Naive thymus-derived CD4-positive, alpha-beta T cell (primary cell): ENCODE measurements at regions of chr10 and their contacts with region 1.

Region 1: DNA sequence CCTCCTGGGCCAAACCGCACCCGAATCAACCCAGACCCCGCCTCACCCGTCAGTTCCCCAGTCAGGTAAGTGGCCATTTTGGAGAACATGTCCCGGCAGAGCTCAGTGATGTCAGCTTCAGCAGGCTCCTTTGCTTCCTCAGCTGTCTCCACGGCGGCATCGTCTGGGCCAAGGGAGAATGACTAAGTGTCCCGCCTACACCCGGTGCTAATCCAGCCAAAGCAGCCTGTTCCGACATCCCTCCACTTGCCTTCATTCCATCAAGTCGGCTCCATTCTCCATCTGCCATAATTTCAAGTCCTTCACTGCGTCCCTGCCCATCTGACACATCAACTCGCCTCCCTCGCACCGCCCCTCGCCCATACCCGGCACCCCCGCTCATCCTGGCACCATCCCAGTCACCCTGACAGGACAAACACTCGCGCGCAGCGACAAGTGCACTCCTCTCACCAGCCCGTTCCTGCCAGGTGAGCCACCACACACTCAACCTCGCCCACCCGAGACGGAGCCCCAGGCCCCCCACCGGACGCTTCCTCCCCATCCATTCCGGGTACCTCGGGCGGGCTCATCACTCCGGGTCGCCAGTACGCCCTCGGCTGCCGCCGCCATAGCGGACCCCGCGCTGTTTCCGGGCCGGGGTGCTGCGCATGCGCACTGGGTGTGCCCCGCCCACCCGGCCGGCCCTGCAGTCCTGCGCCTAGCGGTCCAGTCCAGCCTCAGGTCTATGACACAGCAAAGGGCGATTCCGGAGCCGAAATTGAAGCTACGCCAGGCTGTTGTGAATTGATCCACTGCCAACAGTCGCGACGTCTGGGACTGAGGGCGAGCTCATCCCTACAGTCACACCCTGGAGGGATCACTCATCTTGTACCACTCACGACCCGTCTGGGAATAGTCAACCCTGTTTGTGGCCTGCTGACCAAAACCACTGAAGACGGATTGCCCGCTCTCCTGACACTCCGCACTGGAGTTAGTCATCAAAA is at the start of gene BLOC1S2:
- DNase-seq: peak; percentile 71 to 97 (median 86)
- ATAC-seq: peak; percentile 92
- H3K4me3 ChIP-seq: peak within 1 kb of the TSS; percentile 99
- H3K4me3 Mint-ChIP-seq: peak within 1 kb of the TSS; percentile 95 to 100 (median 100)
- H3K27ac ChIP-seq: peak within 1 kb of the TSS; percentile 86
- H3K27ac Mint-ChIP-seq: peak within 1 kb of the TSS; percentile 94 to 100 (median 99)
- H3K4me1 ChIP-seq: peaks cover 10 to 17% of the 10 kb centered on the region in 2 donors
- H3K4me1 Mint-ChIP-seq: peaks cover 14 to 32% (median 26%) of the 10 kb centered on the region in 7 donors
- H3K27me3 ChIP-seq: no peaks in the 10 kb centered on the region
- H3K27me3 Mint-ChIP-seq: no peaks in the 10 kb centered on the region
- total RNA-seq, gene BLOC1S2: 31.5 to 51.3 (median 39.9) TPM

Region 2: DNA sequence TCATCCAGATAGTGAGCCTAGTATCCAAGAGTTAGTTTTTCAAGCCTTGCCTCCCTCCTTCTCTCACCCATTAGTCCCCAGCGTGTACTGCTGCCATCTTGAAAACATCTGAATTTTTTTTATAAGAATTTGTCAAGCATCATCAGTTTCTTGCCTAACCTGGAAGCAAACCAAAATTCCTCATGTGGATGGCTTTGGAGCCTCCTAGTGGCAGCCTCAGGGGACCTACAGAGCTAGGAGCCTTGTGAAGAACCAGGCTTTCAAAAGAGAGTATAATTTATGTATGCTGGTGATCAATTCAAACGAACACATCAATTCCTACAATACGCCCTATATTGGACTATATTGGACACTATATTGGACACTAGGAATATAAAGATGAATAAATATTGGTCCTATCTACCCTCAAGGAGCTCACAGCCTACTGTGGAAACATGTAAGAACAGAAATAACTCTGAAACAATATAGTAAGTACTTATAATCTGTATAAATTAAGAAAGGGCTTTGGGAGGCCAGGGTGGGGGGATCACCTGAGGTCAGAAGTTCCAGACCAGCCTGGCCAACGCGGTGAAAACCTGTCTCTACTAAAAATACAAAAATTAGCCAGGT is 1114.1 kb before region 1 on chr10:
- CTCF ChIA-PET with region 1: no interaction called
- POLR2A ChIA-PET with region 1: no interaction called
- intact Hi-C with region 1: no loop called
- DNase-seq: no peak
- ATAC-seq: no peak
- H3K4me3 ChIP-seq: no peak overlapping the region
- H3K4me3 Mint-ChIP-seq: no peak overlapping the region
- H3K27ac ChIP-seq: no peak overlapping the region
- H3K27ac Mint-ChIP-seq: no peak overlapping the region
- H3K4me1 ChIP-seq: no peaks in the 10 kb centered on the region
- H3K4me1 Mint-ChIP-seq: no peaks in the 10 kb centered on the region
- H3K27me3 ChIP-seq: no peaks in the 10 kb centered on the region
- H3K27me3 Mint-ChIP-seq: peaks cover 2 to 31% (median 14%) of the 10 kb centered on the region in 5 donors

Region 3: GRCh38 chr10:100046021-100046486 is 240.3 kb before region 1 on chr10:
- CTCF ChIA-PET with region 1: no interaction called
- POLR2A ChIA-PET with region 1: no interaction called
- intact Hi-C with region 1: no loop called
- DNase-seq: peak; percentile 38 to 80 (median 71)
- ATAC-seq: peak; percentile 86
- H3K4me3 ChIP-seq: no peak overlapping the region
- H3K4me3 Mint-ChIP-seq: no peak overlapping the region
- H3K27ac ChIP-seq: no peak overlapping the region
- H3K27ac Mint-ChIP-seq: peak overlapping the region in 2 of 9 donors; percentile 9 to 42
- H3K4me1 ChIP-seq: no peaks in the 10 kb centered on the region
- H3K4me1 Mint-ChIP-seq: peaks cover 0 to 6% (median 0%) of the 10 kb centered on the region in 7 donors
- H3K27me3 ChIP-seq: no peaks in the 10 kb centered on the region
- H3K27me3 Mint-ChIP-seq: peaks cover 0 to 13% (median 6%) of the 10 kb centered on the region in 5 donors

Region 4: GRCh38 chr10:100229819-100230422 is 56.4 kb before region 1 on chr10:
- CTCF ChIA-PET with region 1: interaction called, 5 read pairs
- POLR2A ChIA-PET with region 1: no interaction called
- intact Hi-C with region 1: loop called (anchors 1 kb)
- DNase-seq: no peak
- ATAC-seq: no peak
- H3K4me3 ChIP-seq: peak overlapping the region; percentile 99
- H3K4me3 Mint-ChIP-seq: peak overlapping the region; percentile 85 to 98 (median 91)
- H3K27ac ChIP-seq: peak overlapping the region; percentile 83
- H3K27ac Mint-ChIP-seq: peak overlapping the region; percentile 75 to 97 (median 85)
- H3K4me1 ChIP-seq: peaks cover 0 to 8% of the 10 kb centered on the region in 2 donors
- H3K4me1 Mint-ChIP-seq: peaks cover 16 to 44% (median 36%) of the 10 kb centered on the region in 7 donors
- H3K27me3 ChIP-seq: no peaks in the 10 kb centered on the region
- H3K27me3 Mint-ChIP-seq: no peaks in the 10 kb centered on the region

Region 5: DNA sequence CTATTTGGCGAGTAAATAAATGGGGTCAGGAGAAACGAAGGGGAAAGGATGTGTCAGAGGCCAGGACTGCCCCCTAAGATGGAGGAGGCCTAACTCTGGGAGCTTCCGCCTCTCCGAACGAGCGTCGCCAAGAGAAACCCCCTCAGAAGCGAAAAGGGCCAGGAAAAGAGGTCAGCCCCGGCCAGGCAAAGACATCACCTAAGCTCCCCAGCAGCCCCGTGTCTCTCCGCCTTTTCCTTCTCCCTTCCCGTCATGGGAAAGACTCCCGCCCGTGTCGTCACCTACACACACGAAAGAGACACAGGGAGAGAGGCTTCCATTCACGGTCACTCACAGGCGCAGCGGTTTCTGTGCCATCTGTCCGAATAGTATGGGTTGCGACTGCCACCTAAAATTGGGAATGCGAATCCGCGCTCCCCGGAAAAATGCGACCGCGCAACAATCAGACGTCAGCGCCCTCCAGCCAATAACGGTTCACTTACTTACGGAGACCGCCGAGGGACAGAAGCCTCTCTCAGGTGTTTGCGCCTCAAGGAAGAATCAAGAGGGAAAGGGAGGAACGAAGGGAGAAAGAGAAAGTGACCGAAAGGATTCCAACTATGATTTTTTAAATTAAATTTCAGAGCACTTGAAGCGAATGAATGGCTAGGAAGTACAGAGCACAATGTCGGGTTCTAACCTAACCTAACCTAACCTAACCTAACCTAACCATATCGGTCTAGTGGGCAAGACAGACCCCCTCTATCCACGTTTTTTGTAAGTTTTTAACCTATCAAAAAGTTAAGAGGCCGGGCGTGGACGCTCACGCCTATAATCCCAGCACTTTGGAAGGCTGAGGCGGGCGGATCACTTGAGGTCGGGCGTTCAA is 18.9 kb before region 1 on chr10 and contains the start of gene CWF19L1:
- CTCF ChIA-PET with region 1: no interaction called
- POLR2A ChIA-PET with region 1: interaction called, 6 read pairs
- intact Hi-C with region 1: loop called (anchors 1 kb)
- DNase-seq: peak; percentile 39 to 74 (median 64)
- ATAC-seq: peak; percentile 91
- H3K4me3 ChIP-seq: peak within 1 kb of the TSS; percentile 93
- H3K4me3 Mint-ChIP-seq: peak within 1 kb of the TSS; percentile 89 to 100 (median 100)
- H3K27ac ChIP-seq: peak within 1 kb of the TSS; percentile 96
- H3K27ac Mint-ChIP-seq: peak within 1 kb of the TSS; percentile 95 to 100 (median 99)
- H3K4me1 ChIP-seq: peaks cover 12 to 21% of the 10 kb centered on the region in 2 donors
- H3K4me1 Mint-ChIP-seq: peaks cover 17 to 40% (median 27%) of the 10 kb centered on the region in 7 donors
- H3K27me3 ChIP-seq: no peaks in the 10 kb centered on the region
- H3K27me3 Mint-ChIP-seq: no peaks in the 10 kb centered on the region
- total RNA-seq, gene CWF19L1: 41.8 to 46.8 (median 42.6) TPM

Region 6: GRCh38 chr10:100346765-100347567 is 60.6 kb after region 1 on chr10 and contains the start of gene SCD:
- CTCF ChIA-PET with region 1: no interaction called
- POLR2A ChIA-PET with region 1: no interaction called
- intact Hi-C with region 1: loop called in 1 of 2 experiments (anchors 2 kb)
- DNase-seq: peak; percentile 41 to 86 (median 58)
- ATAC-seq: peak; percentile 93
- H3K4me3 ChIP-seq: peak within 1 kb of the TSS; percentile 67
- H3K4me3 Mint-ChIP-seq: peak within 1 kb of the TSS; percentile 84 to 98 (median 90)
- H3K27ac ChIP-seq: peak within 1 kb of the TSS; percentile 48
- H3K27ac Mint-ChIP-seq: peak within 1 kb of the TSS in 8 of 9 donors; percentile 19 to 87 (median 68)
- H3K4me1 ChIP-seq: peaks cover 5 to 10% of the 10 kb centered on the region in 2 donors
- H3K4me1 Mint-ChIP-seq: peaks cover 15 to 69% (median 27%) of the 10 kb centered on the region in 7 donors
- H3K27me3 ChIP-seq: no peaks in the 10 kb centered on the region
- H3K27me3 Mint-ChIP-seq: peaks cover 0 to 8% (median 0%) of the 10 kb centered on the region in 5 donors
- total RNA-seq, gene SCD: 1.1 to 121 (median 2.3) TPM

Region 7: GRCh38 chr10:100481462-100482081 is 195.2 kb after region 1 on chr10:
- CTCF ChIA-PET with region 1: no interaction called
- POLR2A ChIA-PET with region 1: no interaction called
- intact Hi-C with region 1: loop called in 1 of 2 experiments (anchors 1 kb)
- DNase-seq: peak; percentile 86 to 97 (median 90)
- ATAC-seq: peak; percentile 98
- H3K4me3 ChIP-seq: peak overlapping the region; percentile 70
- H3K4me3 Mint-ChIP-seq: peak overlapping the region; percentile 63 to 92 (median 86)
- H3K27ac ChIP-seq: no peak overlapping the region
- H3K27ac Mint-ChIP-seq: peak overlapping the region in 5 of 9 donors; percentile 1 to 76 (median 66)
- H3K4me1 ChIP-seq: peaks cover 0 to 4% of the 10 kb centered on the region in 2 donors
- H3K4me1 Mint-ChIP-seq: peaks cover 10 to 35% (median 12%) of the 10 kb centered on the region in 7 donors
- H3K27me3 ChIP-seq: no peaks in the 10 kb centered on the region
- H3K27me3 Mint-ChIP-seq: peaks cover 4 to 31% (median 26%) of the 10 kb centered on the region in 5 donors

Region 8: DNA sequence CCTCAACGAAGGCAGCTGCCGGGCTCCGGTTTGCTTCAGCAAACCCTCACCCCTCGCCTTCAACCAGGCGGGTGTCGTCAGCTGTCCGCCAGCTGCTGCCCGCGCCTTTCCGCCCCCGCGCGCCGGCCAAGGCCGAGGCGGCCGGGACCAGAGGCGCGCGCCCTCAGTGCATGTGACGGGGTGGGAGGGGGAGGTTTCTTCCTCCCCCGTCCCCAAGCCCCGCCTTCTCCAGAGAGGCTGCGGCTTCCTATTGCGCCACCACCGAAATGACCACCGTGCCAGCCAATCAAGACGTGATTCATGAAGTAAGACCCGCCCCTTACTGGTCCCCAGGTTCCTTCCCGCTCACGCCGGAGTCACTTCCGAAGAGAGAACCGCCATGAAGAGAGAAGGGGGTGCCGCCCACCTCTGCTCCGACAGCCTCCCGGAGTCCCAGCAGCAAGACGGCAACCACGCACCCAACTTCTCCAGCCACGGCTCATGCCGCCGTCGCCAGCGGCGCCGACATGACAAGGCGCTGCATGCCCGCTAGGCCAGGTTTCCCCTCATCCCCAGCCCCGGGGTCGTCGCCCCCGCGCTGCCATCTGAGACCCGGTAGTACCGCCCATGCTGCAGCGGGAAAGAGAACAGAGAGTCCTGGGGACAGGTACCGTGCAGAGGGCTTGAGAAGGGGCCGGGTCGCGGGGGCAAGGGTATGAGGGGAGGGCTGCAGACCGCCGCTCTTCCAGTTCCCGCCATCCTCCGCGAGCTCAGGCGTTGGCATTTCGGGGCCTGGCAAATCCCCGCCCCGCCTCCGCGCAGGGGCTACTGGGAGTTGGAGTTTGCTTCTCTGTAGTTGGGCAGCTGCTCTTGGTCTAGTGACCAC is 626.5 kb after region 1 on chr10 and contains the start of gene SLF2:
- CTCF ChIA-PET with region 1: no interaction called
- POLR2A ChIA-PET with region 1: no interaction called
- intact Hi-C with region 1: loop called in 1 of 2 experiments (anchors 10 kb)
- DNase-seq: peak; percentile 69 to 91 (median 88)
- ATAC-seq: peak; percentile 96
- H3K4me3 ChIP-seq: peak within 1 kb of the TSS; percentile 96
- H3K4me3 Mint-ChIP-seq: peak within 1 kb of the TSS; percentile 91 to 100 (median 99)
- H3K27ac ChIP-seq: peak within 1 kb of the TSS; percentile 89
- H3K27ac Mint-ChIP-seq: peak within 1 kb of the TSS; percentile 88 to 99 (median 97)
- H3K4me1 ChIP-seq: peaks cover 12 to 13% of the 10 kb centered on the region in 2 donors
- H3K4me1 Mint-ChIP-seq: peaks cover 22 to 63% (median 60%) of the 10 kb centered on the region in 7 donors
- H3K27me3 ChIP-seq: no peaks in the 10 kb centered on the region
- H3K27me3 Mint-ChIP-seq: no peaks in the 10 kb centered on the region
- total RNA-seq, gene SLF2: 20.1 to 43.7 (median 38.8) TPM